ENCODE measurements at regions of chr11 and their contacts with region 1.

Region 1: GRCh38 chr11:46489661-46490560 is 98.3 kb upstream of the CHRM4 start:
- DNase-seq: peak; percentile 18
- H3K4me3 Mint-ChIP-seq: no peak overlapping the region
- H3K27ac Mint-ChIP-seq: no peak overlapping the region
- H3K4me1 Mint-ChIP-seq: peaks cover 4% of the 10 kb centered on the region
- H3K27me3 Mint-ChIP-seq: no peaks in the 10 kb centered on the region

Region 2: GRCh38 chr11:46529095-46529905 is 39.4 kb after region 1 on chr11:
- intact Hi-C with region 1: loop called (anchors 2 kb)
- DNase-seq: peak; percentile 57
- H3K4me3 Mint-ChIP-seq: no peak overlapping the region
- H3K27ac Mint-ChIP-seq: no peak overlapping the region
- H3K4me1 Mint-ChIP-seq: peaks cover 22% of the 10 kb centered on the region
- H3K27me3 Mint-ChIP-seq: no peaks in the 10 kb centered on the region

Region 3: GRCh38 chr11:46537537-46538295 is 47.8 kb after region 1 on chr11:
- intact Hi-C with region 1: loop called (anchors 1 kb)
- DNase-seq: peak; percentile 47
- H3K4me3 Mint-ChIP-seq: no peak overlapping the region
- H3K27ac Mint-ChIP-seq: no peak overlapping the region
- H3K4me1 Mint-ChIP-seq: peaks cover 15% of the 10 kb centered on the region
- H3K27me3 Mint-ChIP-seq: no peaks in the 10 kb centered on the region

Region 4: GRCh38 chr11:47111318-47111804 is 621.5 kb after region 1 on chr11:
- intact Hi-C with region 1: no loop called
- DNase-seq: no peak
- H3K4me3 Mint-ChIP-seq: no peak overlapping the region
- H3K27ac Mint-ChIP-seq: no peak overlapping the region
- H3K4me1 Mint-ChIP-seq: no peaks in the 10 kb centered on the region
- H3K27me3 Mint-ChIP-seq: peaks cover 7% of the 10 kb centered on the region

Measured in activated T-helper 1 cell treated with anti-CD3 and anti-CD28 coated beads, Interleukin-12 subunit alpha, Interleukin-12 subunit beta, Interleukin-2, Interleukin-4 antibody, amounts not matched to agents 30 ng/mL and 10 ng/mL and 1 ng/mL, durations not matched to agents 14 hours and 24 hours and 36 hours (primary cell).